Activated CD4-positive, alpha-beta T cell treated with anti-CD3 and anti-CD28 coated beads, Interleukin-2, amount 10 ng/mL, durations not matched to agents 24 days and 14 days (primary cell): ENCODE measurements at regions of chr7 and their contacts with region 1.

Region 1: DNA sequence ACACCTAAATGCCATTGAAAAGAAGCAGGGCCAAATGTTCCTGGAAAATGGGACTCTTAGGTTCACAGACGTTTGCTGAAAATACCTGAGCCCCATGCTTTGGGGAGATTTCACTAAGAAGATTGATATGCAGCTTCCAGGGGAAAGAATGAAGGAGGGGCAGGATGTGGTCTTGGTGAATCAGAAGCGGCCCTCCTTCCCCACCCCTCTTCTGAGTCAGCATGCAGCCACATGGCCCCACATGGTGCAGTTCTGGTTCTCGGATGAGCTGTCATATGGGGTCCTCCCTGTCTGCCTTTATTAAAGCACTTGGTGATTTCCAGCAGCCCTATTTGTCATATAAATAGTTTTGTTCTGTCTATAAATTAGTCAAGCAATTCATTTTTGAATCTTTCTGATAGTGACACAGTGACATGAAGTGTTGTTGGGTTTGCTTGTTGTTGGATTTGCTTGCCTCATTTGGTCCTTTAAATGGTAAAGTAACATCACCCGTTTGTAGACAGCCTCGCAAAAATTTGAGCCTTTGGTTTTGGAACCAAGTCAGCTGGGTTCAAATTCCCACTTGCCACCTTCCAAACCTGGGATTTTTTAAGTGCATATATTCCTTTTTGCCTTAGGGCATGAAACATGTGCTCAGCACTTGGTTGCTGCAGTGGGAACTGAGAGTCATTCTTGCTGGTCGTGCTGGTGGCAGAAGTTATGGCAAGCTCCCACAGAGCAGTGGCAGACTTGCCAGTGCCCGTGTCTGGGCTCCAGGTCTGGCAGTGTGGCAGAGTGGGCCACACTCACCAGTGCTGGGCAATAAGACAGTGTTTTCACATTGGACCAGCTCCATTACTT is 68.1 kb upstream of the CDK6 start:
- DNase-seq: peak; percentile 93
- H3K4me3 Mint-ChIP-seq: peak overlapping the region; percentile 53
- H3K27ac Mint-ChIP-seq: peak overlapping the region; percentile 94
- H3K4me1 Mint-ChIP-seq: peaks cover 21% of the 10 kb centered on the region
- H3K27me3 Mint-ChIP-seq: no peaks in the 10 kb centered on the region

Region 2: DNA sequence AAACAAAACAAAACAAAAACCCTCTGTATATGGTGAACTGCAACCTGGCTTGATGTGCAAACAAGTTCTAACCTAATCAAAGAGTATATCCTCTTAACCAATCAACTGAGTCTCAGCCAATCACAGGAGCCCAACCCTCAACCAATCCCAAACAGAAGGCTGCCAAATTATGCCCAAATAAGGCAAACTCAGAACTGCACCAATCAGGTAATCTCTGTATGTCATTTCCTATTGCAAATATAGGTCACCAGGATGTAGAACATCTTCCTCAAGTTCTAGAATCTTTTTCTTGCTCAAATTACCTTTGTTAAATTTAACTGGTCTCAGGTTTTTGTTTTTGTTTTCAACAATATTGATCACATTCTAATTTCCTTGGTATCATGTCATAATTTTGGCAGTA is 319.5 kb before region 1 on chr7:
- intact Hi-C with region 1: loop called (anchors 5 kb)
- DNase-seq: peak; percentile 61
- H3K4me3 Mint-ChIP-seq: no peak overlapping the region
- H3K27ac Mint-ChIP-seq: no peak overlapping the region
- H3K4me1 Mint-ChIP-seq: peaks cover 45% of the 10 kb centered on the region
- H3K27me3 Mint-ChIP-seq: no peaks in the 10 kb centered on the region

Region 3: GRCh38 chr7:92691578-92691977 is 212.9 kb before region 1 on chr7:
- intact Hi-C with region 1: loop called (anchors 1 kb)
- DNase-seq: peak; percentile 83
- H3K4me3 Mint-ChIP-seq: peak overlapping the region; percentile 56
- H3K27ac Mint-ChIP-seq: peak overlapping the region; percentile 87
- H3K4me1 Mint-ChIP-seq: peaks cover 68% of the 10 kb centered on the region
- H3K27me3 Mint-ChIP-seq: no peaks in the 10 kb centered on the region

Region 4: GRCh38 chr7:92809397-92810241 is 94.9 kb before region 1 on chr7:
- intact Hi-C with region 1: loop called (anchors 1 kb)
- DNase-seq: peak; percentile 91
- H3K4me3 Mint-ChIP-seq: peak overlapping the region; percentile 73
- H3K27ac Mint-ChIP-seq: peak overlapping the region; percentile 90
- H3K4me1 Mint-ChIP-seq: peaks cover 75% of the 10 kb centered on the region
- H3K27me3 Mint-ChIP-seq: no peaks in the 10 kb centered on the region

Region 5: GRCh38 chr7:92944633-92945032 is 40.1 kb after region 1 on chr7:
- intact Hi-C with region 1: loop called (anchors 1 kb)
- DNase-seq: no peak
- H3K4me3 Mint-ChIP-seq: no peak overlapping the region
- H3K27ac Mint-ChIP-seq: no peak overlapping the region
- H3K4me1 Mint-ChIP-seq: no peaks in the 10 kb centered on the region
- H3K27me3 Mint-ChIP-seq: no peaks in the 10 kb centered on the region

Region 6: GRCh38 chr7:93055543-93056107 is 151.1 kb after region 1 on chr7:
- intact Hi-C with region 1: loop called (anchors 1 kb)
- DNase-seq: peak; percentile 62
- H3K4me3 Mint-ChIP-seq: no peak overlapping the region
- H3K27ac Mint-ChIP-seq: no peak overlapping the region
- H3K4me1 Mint-ChIP-seq: peaks cover 13% of the 10 kb centered on the region
- H3K27me3 Mint-ChIP-seq: peaks cover 6% of the 10 kb centered on the region